Colonic mucosa (tissue), 4 donors: ENCODE measurements at regions of chr1 and their contacts with region 1.

Region 1: DNA sequence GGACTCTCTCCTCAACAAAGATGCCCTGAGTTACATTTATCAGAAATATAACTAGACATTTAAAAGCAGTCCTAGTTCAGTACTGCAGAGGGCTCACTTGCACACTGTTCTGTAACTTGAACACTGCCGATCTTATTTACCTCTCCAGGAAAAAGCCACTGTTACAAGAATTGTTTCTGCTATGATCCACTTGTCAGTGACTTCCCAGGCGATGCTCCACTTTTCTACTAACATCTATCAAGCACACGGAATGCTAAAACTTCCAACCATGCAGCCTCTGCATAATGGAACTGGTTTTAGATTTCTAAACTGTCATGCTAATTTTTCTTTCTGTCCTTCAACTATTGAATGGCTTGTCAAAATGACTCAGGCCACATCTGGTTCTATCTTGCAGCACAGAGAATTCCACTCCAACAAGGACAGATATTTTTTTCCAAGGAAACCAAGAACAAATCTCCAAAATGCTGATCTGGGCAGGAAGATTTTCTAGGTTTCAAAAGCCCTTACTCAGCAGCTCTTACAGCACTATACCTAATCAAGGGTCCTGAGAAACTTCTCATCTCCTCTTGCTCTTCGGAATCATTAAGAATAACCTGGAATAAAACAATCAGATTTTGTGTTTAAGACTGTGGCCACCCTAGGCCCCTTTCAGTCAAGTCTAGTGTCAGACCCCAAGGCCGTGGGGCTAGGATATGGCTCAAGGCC is 9.9 kb downstream of the SEC16B start:
- DNase-seq: no peak
- H3K4me3 ChIP-seq: no peak overlapping the region
- H3K27ac ChIP-seq: no peak overlapping the region
- H3K4me1 ChIP-seq: no peaks in the 10 kb centered on the region
- H3K27me3 ChIP-seq: no peaks in the 10 kb centered on the region
- CTCF ChIP-seq: no peak

Region 2: DNA sequence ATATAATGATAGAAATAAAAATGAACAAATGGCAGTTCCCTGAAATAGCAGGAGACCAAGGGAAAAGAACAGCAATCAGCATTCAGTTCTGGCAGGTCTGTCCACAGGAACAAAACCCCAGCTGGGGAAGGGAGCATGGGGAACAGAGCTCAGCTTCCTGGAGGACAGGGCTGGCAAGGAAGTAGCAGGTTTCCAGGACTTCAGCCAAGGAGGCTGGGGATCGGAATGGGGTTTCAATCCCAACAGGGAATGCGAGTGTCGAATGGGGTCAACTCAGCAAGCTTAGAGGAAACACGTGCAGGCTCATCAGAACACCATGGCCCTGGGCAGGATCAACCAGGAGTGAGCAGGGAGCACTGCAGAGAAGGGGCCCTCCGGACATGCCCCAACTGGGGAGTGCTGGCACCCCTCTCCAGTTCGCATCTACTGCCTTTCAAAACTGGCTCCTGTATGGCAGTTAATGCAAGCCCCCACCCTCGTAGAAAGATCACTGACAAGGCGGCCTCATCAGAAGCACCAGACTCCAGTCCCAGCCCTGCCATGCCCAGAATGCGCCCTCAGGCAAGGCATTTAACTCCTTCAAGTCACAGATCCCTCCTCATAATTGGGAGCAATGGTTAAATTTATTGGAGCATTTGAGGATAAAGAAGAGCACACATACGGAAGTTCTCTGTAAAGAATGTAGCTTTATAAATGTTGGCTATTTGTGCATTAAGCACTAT is 62.5 kb before region 1 on chr1:
- intact Hi-C with region 1: no loop called
- DNase-seq: peak; percentile 21
- H3K4me3 ChIP-seq: no peak overlapping the region
- H3K27ac ChIP-seq: peak overlapping the region; percentile 4
- H3K4me1 ChIP-seq: no peaks in the 10 kb centered on the region
- H3K27me3 ChIP-seq: no peaks in the 10 kb centered on the region
- CTCF ChIP-seq: no peak

Region 3: GRCh38 chr1:178273707-178274410 is 313.9 kb after region 1 on chr1:
- intact Hi-C with region 1: loop called (anchors 10 kb)
- DNase-seq: no peak
- H3K4me3 ChIP-seq: no peak overlapping the region
- H3K27ac ChIP-seq: no peak overlapping the region
- H3K4me1 ChIP-seq: no peaks in the 10 kb centered on the region
- H3K27me3 ChIP-seq: no peaks in the 10 kb centered on the region
- CTCF ChIP-seq: no peak